ENCODE measurements at regions of chr2 and their contacts with region 1.

Region 1: GRCh38 chr2:197804049-197804757 is at the start of gene PLCL1:
- DNase-seq: peak; percentile 95
- H3K4me3 ChIP-seq: peak within 1 kb of the TSS; percentile 91
- H3K27ac ChIP-seq: peak within 1 kb of the TSS; percentile 85
- H3K4me1 ChIP-seq: peaks cover 79% of the 10 kb centered on the region
- H3K27me3 ChIP-seq: no peaks in the 10 kb centered on the region
- CTCF ChIP-seq: peak; percentile 46
- total RNA-seq, gene PLCL1: 78.6 TPM

Region 2: GRCh38 chr2:198055716-198056115 is 251.5 kb after region 1 on chr2:
- intact Hi-C with region 1: loop called (anchors 5 kb)
- DNase-seq: no peak
- H3K4me3 ChIP-seq: no peak overlapping the region
- H3K27ac ChIP-seq: peak overlapping the region; percentile 69
- H3K4me1 ChIP-seq: peaks cover 72% of the 10 kb centered on the region
- H3K27me3 ChIP-seq: no peaks in the 10 kb centered on the region
- CTCF ChIP-seq: no peak

Region 3: DNA sequence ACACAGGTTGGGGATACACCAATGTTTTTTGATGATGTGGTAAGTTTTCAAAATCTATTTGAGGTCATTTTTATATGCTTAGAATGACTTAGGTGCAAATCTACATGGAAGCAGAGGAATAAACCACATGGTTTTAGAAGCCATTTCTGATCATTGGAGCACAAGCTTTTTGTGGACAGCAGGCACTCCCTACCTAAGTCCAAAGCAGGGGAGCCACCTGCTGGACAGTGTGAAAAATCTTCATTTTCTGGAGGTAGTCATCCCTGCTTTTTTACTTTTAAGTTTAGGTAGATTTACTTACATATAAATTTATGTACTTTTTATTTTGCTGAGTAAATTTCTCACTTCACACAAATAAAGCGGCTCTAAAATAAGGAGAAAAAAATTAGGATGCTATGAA is 323.4 kb after region 1 on chr2:
- intact Hi-C with region 1: loop called (anchors 5 kb)
- DNase-seq: peak; percentile 14
- H3K4me3 ChIP-seq: no peak overlapping the region
- H3K27ac ChIP-seq: no peak overlapping the region
- H3K4me1 ChIP-seq: peaks cover 43% of the 10 kb centered on the region
- H3K27me3 ChIP-seq: no peaks in the 10 kb centered on the region
- CTCF ChIP-seq: peak; percentile 76

Region 4: GRCh38 chr2:198296665-198297308 is 492.6 kb after region 1 on chr2:
- intact Hi-C with region 1: loop called (anchors 10 kb)
- DNase-seq: no peak
- H3K4me3 ChIP-seq: no peak overlapping the region
- H3K27ac ChIP-seq: no peak overlapping the region
- H3K4me1 ChIP-seq: no peaks in the 10 kb centered on the region
- H3K27me3 ChIP-seq: peaks cover under 1% of the 10 kb centered on the region
- CTCF ChIP-seq: peak; percentile 89